Aorta (tissue), 5 donors: ENCODE measurements at regions of chr3 and their contacts with region 1.

Region 1: GRCh38 chr3:102415553-102415952 is 19.3 kb upstream of the ZPLD1 start:
- DNase-seq: no peak
- ATAC-seq: no peak
- H3K4me3 ChIP-seq: peak overlapping the region; percentile 31 to 41
- H3K27ac ChIP-seq: no peak overlapping the region
- H3K4me1 ChIP-seq: no peaks in the 10 kb centered on the region
- H3K27me3 ChIP-seq: no peaks in the 10 kb centered on the region

Region 2: DNA sequence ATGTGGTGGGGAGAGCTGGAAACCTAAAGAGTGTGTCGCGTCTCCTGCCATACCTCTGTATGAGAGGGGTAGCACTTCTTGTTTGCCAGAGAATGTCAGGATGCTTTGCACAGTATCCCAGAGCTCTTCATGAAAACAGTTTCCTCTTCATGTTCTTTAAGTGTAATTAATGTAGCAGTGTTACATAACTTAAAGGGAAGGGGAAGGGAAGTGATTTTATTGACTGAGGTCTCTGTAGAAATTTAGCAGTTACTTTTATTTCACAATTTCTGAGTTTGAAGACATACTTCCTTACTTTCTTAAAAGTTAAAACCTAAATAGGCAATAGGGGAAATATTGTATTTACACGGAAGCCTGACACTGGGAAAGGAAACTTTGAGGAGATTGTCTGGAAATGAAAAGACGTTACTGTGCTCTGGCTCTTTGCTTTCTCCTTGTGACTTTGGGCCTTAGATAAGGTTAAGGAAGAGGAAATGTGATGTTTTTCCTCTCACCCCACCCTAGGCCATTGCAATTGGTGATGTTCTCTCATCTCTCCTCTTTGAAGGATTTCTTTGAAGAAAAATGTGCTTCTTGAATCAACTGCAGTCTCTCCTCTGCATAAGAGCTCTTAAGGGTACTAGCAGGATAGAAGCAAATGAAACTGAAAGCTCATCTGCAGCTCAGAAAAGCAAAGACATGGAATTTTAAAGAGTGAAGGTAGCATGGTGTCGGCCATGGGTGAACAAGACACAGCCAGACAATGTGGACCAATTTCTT is 630.5 kb before region 1 on chr3:
- intact Hi-C with region 1: loop called in 1 of 2 experiments (anchors 5 kb)
- DNase-seq: no peak
- ATAC-seq: no peak
- H3K4me3 ChIP-seq: no peak overlapping the region
- H3K27ac ChIP-seq: no peak overlapping the region
- H3K4me1 ChIP-seq: peaks cover 0 to 4% of the 10 kb centered on the region in 2 donors
- H3K27me3 ChIP-seq: no peaks in the 10 kb centered on the region

Region 3: DNA sequence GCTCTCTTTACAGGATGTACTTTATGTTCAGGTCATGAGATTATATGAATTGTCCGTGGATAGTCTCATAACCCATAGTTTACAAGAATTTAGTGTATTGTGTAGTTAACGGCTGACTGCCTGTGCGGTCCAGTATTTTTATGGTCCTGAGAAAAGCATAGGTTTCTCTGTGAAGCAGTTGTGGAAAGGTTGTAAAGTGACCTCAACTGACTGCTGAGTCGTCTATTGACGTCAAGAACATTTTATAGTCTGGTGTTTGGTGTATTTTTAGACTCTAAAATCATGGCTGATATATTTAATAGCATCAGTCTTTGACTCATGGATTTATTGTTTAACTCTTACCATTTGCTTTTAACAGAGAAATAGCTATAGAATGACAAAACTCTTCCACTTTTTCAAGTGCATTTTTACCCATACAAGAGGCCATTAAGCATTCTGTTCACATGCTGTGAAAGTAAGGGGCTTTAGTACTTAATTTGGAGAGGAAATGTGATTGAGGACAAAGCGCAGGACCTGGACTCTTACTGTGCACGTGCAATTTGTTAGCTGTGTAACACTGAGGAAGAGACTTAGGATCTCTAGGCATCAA is 325.6 kb before region 1 on chr3:
- intact Hi-C with region 1: no loop called
- DNase-seq: no peak
- ATAC-seq: no peak
- H3K4me3 ChIP-seq: no peak overlapping the region
- H3K27ac ChIP-seq: no peak overlapping the region
- H3K4me1 ChIP-seq: no peaks in the 10 kb centered on the region
- H3K27me3 ChIP-seq: no peaks in the 10 kb centered on the region

Region 4: GRCh38 chr3:102460579-102460978 is 45.0 kb after region 1 on chr3:
- intact Hi-C with region 1: no loop called
- DNase-seq: no peak
- ATAC-seq: no peak
- H3K4me3 ChIP-seq: no peak overlapping the region
- H3K27ac ChIP-seq: no peak overlapping the region
- H3K4me1 ChIP-seq: no peaks in the 10 kb centered on the region
- H3K27me3 ChIP-seq: peaks cover 0 to under 1% of the 10 kb centered on the region in 2 donors